Gastrocnemius medialis (tissue), 4 donors: ENCODE measurements at regions of chr12 and their contacts with region 1.

Region 1: DNA sequence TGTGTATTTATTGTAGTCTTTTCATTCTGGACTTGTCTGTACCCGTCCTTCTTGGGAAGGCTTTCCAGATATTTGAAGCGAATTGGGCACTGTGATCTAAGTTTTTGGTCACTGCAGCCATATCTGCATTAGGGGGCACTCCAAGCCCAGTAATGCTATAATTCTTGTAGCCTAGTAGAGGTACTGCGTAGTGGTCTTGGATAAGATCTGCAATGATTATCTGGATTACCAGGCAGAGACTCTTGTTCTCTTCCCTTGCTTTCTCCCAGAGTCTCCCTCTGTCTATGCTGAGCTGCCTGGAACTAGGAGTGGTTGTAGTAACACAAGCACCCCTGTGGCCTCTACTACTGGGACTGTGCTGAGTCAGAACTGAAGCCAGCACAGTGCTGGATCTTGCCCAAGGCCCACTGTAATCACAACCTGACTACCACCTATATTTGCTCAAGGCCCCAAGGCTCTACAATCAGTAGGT is 30.0 kb downstream of the SLC38A2 start:
- DNase-seq: no peak
- ATAC-seq: peak; percentile 80 to 87
- H3K4me3 ChIP-seq: no peak overlapping the region
- H3K27ac ChIP-seq: no peak overlapping the region
- H3K4me1 ChIP-seq: peaks cover 4 to 5% of the 10 kb centered on the region in 2 donors
- H3K27me3 ChIP-seq: no peaks in the 10 kb centered on the region
- CTCF ChIP-seq: peak; percentile 56 to 79 (median 66)
- POLR2A ChIP-seq: no peak

Region 2: GRCh38 chr12:46205294-46205693 is 137.3 kb before region 1 on chr12:
- in situ Hi-C with region 1: no loop called
- intact Hi-C with region 1: no loop called
- DNase-seq: no peak
- ATAC-seq: no peak
- H3K4me3 ChIP-seq: no peak overlapping the region
- H3K27ac ChIP-seq: no peak overlapping the region
- H3K4me1 ChIP-seq: peaks cover 29 to 40% of the 10 kb centered on the region in 2 donors
- H3K27me3 ChIP-seq: no peaks in the 10 kb centered on the region
- CTCF ChIP-seq: no peak
- POLR2A ChIP-seq: no peak

Region 3: DNA sequence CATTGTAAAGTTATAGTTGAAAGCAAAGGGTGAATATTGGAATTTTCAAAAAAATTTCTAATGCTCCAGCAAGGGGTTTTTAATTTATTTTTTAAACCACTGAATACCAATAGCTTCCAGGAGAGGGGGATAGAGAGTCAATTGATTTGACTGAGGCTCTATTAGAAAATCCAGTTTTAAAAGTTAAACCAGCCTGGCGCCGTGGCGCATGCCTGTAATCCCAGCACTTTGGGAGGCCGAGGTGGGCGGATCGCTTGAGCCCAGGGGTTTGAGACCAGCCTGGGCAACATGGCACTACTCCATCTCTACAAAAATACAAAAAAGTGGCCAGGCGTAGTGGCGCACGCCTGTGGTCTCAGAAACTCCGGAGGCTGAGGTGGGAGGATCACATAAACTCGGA is 333.1 kb after region 1 on chr12:
- in situ Hi-C with region 1: loop called in 2 of 4 experiments (anchors 10 kb)
- intact Hi-C with region 1: loop called (anchors 2 kb)
- DNase-seq: no peak
- ATAC-seq: no peak
- H3K4me3 ChIP-seq: no peak overlapping the region
- H3K27ac ChIP-seq: no peak overlapping the region
- H3K4me1 ChIP-seq: peaks cover 27 to 38% of the 10 kb centered on the region in 2 donors
- H3K27me3 ChIP-seq: no peaks in the 10 kb centered on the region
- CTCF ChIP-seq: peak; percentile 60 to 77 (median 72)
- POLR2A ChIP-seq: no peak

Region 4: GRCh38 chr12:46983393-46984266 is 641.0 kb after region 1 on chr12:
- in situ Hi-C with region 1: no loop called
- intact Hi-C with region 1: loop called (anchors 1 kb)
- DNase-seq: peak in 1 of 2 donors; percentile 36
- ATAC-seq: peak; percentile 98 to 99
- H3K4me3 ChIP-seq: no peak overlapping the region
- H3K27ac ChIP-seq: peak overlapping the region in 1 of 4 donors; percentile 17
- H3K4me1 ChIP-seq: peaks cover 3 to 10% of the 10 kb centered on the region in 2 donors
- H3K27me3 ChIP-seq: no peaks in the 10 kb centered on the region
- CTCF ChIP-seq: peak; percentile 73 to 85 (median 78)
- POLR2A ChIP-seq: no peak

Region 5: GRCh38 chr12:47021298-47021697 is 678.7 kb after region 1 on chr12:
- in situ Hi-C with region 1: loop called in 3 of 4 experiments (anchors 10 to 25 kb)
- intact Hi-C with region 1: loop called (anchors 2 kb)
- DNase-seq: no peak
- ATAC-seq: peak; percentile 56 to 58
- H3K4me3 ChIP-seq: no peak overlapping the region
- H3K27ac ChIP-seq: no peak overlapping the region
- H3K4me1 ChIP-seq: no peaks in the 10 kb centered on the region
- H3K27me3 ChIP-seq: no peaks in the 10 kb centered on the region
- CTCF ChIP-seq: peak; percentile 45 to 69 (median 47)
- POLR2A ChIP-seq: no peak